ENCODE measurements at regions of chr6 and their contacts with region 1.

Region 1: GRCh38 chr6:152309648-152310047 is 327.5 kb downstream of the SYNE1 start:
- DNase-seq: no peak
- H3K4me3 ChIP-seq: no peak overlapping the region
- H3K27ac ChIP-seq: no peak overlapping the region
- H3K4me1 ChIP-seq: peaks cover 23% of the 10 kb centered on the region
- H3K27me3 ChIP-seq: no peaks in the 10 kb centered on the region
- CTCF ChIP-seq: no peak
- POLR2A ChIP-seq: no peak

Region 2: DNA sequence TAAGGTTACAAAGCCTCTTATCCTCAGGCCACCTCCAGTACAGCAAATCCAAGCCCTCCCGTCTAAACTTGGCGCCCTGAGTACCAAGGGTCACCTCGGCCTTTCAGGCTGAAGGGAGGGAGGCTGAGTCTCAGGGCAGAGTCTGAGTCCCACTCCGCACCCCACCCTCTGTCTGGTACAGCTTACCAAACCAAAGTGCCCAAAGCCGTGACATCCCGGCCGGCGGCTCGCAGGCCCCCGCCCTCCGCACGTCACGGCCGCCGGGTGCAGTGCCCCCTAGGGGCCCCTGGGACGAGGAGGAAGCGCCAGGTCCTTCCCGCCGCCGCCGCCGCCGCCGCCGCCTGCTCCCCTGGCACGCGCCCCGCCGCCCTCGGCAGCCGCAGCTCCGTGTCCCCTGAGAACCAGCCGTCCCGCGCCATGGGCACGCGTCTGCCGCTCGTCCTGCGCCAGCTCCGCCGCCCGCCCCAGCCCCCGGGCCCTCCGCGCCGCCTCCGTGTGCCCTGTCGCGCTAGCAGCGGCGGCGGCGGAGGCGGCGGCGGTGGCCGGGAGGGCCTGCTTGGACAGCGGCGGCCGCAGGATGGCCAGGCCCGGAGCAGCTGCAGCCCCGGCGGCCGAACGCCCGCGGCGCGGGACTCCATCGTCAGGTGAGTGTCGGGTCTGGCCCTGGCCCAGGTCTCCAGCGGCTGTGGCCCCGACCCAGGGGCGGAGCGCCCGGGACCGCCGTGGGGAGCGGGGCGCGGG is 1444.1 kb before region 1 on chr6 and contains the start of gene MTHFD1L:
- CTCF ChIA-PET with region 1: no interaction called
- POLR2A ChIA-PET with region 1: no interaction called
- dilution Hi-C with region 1: no loop called
- intact Hi-C with region 1: loop called (anchors 5 kb)
- DNase-seq: peak; percentile 86
- H3K4me3 ChIP-seq: peak within 1 kb of the TSS; percentile 90 to 93 (median 92)
- H3K27ac ChIP-seq: peak within 1 kb of the TSS; percentile 93
- H3K4me1 ChIP-seq: peaks cover 25% of the 10 kb centered on the region
- H3K27me3 ChIP-seq: no peaks in the 10 kb centered on the region
- CTCF ChIP-seq: peak; percentile 58 to 62
- POLR2A ChIP-seq: peak; percentile 60
- total RNA-seq, gene MTHFD1L: 120 and 121 TPM in 2 replicates

Region 3: DNA sequence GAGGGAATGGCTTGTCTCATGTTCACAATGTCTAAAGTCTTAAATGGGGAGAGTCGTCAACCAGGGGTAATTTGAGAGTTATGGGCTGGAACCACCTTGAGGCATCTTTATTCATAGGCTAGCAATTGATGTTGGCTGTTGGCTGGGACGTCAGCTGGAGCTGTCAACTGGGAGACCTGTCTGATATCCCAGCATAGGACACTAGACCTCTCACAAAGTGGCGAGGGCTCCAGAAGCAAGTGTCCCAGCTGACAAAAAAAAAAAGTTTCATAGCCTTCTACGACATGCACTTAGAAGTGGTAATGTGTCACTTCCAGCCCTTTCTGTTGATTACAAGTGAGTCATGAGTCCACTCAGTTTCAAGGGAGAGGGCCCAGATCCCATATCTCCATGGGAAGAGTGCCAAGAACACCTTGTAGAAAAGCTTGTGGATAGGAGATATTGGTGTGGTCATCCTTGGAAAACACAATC is 224.2 kb before region 1 on chr6:
- CTCF ChIA-PET with region 1: no interaction called
- POLR2A ChIA-PET with region 1: no interaction called
- dilution Hi-C with region 1: no loop called
- intact Hi-C with region 1: no loop called
- DNase-seq: peak; percentile 59
- H3K4me3 ChIP-seq: no peak overlapping the region
- H3K27ac ChIP-seq: no peak overlapping the region
- H3K4me1 ChIP-seq: peaks cover 14% of the 10 kb centered on the region
- H3K27me3 ChIP-seq: no peaks in the 10 kb centered on the region
- CTCF ChIP-seq: no peak
- POLR2A ChIP-seq: no peak

Region 4: DNA sequence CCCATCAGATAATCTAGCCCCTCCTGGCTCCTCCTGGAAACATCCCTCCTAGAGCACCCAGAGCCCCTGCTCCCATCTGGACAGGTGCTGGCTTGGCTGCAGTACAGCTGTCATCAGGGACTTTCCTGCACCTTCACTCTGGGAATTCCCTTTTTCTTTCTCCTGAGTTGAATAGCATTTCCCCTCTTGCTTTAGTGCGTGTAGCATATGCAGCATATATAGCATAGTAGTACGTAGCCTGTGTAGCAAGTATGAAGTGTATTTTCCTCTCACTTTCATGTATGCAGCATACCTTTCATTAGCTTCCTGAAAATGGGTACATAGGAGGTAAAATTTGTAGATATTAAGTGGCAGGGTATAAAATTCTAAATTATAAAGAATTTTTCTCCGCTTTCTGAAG is 149.3 kb before region 1 on chr6:
- CTCF ChIA-PET with region 1: no interaction called
- POLR2A ChIA-PET with region 1: no interaction called
- dilution Hi-C with region 1: no loop called
- intact Hi-C with region 1: no loop called
- DNase-seq: peak; percentile 12
- H3K4me3 ChIP-seq: no peak overlapping the region
- H3K27ac ChIP-seq: no peak overlapping the region
- H3K4me1 ChIP-seq: peaks cover 5% of the 10 kb centered on the region
- H3K27me3 ChIP-seq: no peaks in the 10 kb centered on the region
- CTCF ChIP-seq: no peak
- POLR2A ChIP-seq: no peak

Region 5: DNA sequence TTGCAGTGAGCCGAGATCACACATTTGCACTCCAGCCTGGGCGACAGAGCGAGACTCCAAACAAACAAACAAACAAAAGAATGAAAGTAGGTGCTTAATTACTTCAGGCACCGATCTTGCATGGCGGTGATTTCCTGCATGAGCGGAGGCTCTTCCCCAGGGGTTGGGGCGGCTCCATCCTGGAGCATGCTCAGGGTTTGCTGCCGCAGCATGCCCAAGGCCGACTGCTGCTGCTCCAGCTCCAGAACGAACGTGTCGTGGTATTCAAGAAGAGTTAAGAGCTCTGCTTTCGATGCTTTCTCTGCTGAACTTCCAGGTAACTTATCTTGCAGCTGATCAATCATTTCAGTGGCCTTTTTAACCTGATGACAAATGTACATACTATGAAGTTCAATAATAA is 13.7 kb after region 1 on chr6:
- CTCF ChIA-PET with region 1: no interaction called
- POLR2A ChIA-PET with region 1: no interaction called
- dilution Hi-C with region 1: no loop called
- intact Hi-C with region 1: no loop called
- DNase-seq: no peak
- H3K4me3 ChIP-seq: no peak overlapping the region
- H3K27ac ChIP-seq: no peak overlapping the region
- H3K4me1 ChIP-seq: no peaks in the 10 kb centered on the region
- H3K27me3 ChIP-seq: no peaks in the 10 kb centered on the region
- CTCF ChIP-seq: no peak
- POLR2A ChIP-seq: no peak